A673 (cell line): ENCODE measurements at regions of chr7 and their contacts with region 1.

Region 1: DNA sequence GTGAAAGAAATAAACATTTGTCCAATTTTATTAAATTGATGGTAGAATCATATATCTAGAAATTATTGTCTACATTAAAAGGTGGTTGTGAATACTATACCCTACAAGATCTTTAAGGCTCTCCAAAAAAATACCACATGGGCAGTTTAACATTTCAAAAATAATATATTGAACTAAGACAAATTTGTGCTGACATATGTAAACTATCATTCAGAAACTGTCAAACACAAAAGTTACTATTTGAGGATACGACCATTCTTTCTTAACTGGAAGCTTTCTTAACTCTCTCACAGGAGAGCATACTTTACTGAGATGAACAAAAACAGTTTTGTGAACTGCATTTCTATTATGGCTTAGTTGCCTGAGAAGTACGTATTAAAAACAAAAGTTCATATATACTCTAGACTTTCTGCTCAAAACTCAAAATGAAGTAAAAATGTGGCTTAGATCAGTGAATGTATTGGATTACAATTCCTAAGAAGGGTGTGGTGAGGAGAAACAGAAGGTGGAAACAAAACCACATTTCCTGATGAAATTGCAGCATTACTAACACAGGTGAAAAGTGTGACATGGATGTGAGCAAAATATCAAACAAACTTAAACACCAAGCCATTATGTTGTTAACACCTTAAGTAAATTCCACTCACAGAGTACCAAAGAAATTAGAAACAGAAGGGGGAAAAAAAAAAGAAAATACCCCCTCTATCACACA is 138.5 kb downstream of the SEMA3A start:
- DNase-seq: no peak
- H3K4me3 ChIP-seq: no peak overlapping the region
- H3K27ac ChIP-seq: no peak overlapping the region
- H3K4me1 ChIP-seq: peaks cover 13% of the 10 kb centered on the region
- H3K27me3 ChIP-seq: no peaks in the 10 kb centered on the region
- CTCF ChIP-seq: no peak

Region 2: GRCh38 chr7:84042110-84042539 is 13.9 kb before region 1 on chr7:
- CTCF ChIA-PET with region 1: no interaction called
- POLR2A ChIA-PET with region 1: interaction called, 12 read pairs
- intact Hi-C with region 1: no loop called
- DNase-seq: peak; percentile 90
- H3K4me3 ChIP-seq: peak overlapping the region; percentile 2
- H3K27ac ChIP-seq: peak overlapping the region; percentile 84
- H3K4me1 ChIP-seq: peaks cover 68% of the 10 kb centered on the region
- H3K27me3 ChIP-seq: no peaks in the 10 kb centered on the region
- CTCF ChIP-seq: no peak

Region 3: GRCh38 chr7:84113286-84113685 is 57.2 kb after region 1 on chr7:
- CTCF ChIA-PET with region 1: no interaction called
- POLR2A ChIA-PET with region 1: no interaction called
- intact Hi-C with region 1: no loop called
- DNase-seq: no peak
- H3K4me3 ChIP-seq: no peak overlapping the region
- H3K27ac ChIP-seq: no peak overlapping the region
- H3K4me1 ChIP-seq: peaks cover 56% of the 10 kb centered on the region
- H3K27me3 ChIP-seq: no peaks in the 10 kb centered on the region
- CTCF ChIP-seq: no peak